Right ventricle myocardium inferior (tissue), 1 donor: ENCODE measurements at regions of chr11 and their contacts with region 1.

Region 1: DNA sequence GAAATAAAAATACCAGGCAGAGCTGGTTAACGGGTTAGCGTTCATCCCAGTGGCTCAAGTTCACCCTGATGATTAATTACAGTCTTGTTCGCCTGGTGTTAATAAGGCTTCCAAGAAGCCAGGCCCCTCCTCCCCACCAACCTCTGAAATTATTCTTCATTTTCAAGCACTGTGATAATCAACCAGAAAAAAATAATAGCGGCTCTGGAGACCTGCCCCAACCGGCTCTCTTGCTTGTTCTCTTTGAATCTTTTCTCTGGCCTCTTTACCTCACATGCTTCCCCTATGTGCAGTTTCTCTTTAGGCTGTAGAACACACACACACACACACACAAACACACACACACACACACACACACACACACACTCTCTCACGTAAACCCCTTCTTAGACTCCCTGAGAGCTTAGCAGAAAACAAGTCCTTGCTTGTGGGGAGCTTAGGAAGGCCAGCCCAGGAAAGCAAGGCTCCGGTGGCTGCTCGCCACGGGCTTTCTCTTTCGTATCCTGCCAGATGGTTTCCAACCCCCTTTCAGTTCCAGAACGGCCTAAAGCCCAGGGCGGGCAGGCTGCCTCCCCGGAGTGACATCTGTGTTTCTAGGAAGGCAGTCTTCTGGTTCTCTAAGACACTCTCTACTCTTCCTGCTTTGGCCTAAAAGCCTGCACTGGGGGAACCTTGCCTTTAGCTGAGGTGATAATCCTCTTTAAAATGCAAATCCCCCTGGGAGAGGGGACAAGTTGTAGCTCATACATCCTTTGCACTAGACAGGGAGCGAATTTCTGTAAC is 106.4 kb upstream of the SESN3 start:
- DNase-seq: peak; percentile 84
- ATAC-seq: peak; percentile 78

Region 2: DNA sequence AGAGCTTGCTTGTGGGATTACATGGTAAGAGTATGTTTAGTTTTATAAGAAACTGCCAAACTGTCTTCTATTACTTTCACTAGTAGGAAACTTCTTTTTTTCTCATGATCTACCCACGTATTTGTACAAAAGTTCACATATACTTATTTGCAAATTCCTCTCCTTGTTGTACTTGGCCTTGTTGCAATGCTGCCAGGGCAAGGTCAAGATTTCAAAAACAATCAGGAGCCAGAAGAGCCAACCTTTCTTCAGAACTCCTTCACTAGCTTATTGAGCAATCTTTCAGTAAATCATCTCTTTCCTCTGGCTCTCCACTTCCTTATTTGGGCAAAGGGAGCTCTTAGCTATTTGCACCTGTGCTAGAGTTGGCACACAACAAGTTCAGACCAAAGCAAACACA is 260.9 kb before region 1 on chr11:
- intact Hi-C with region 1: loop called (anchors 10 kb)
- DNase-seq: no peak
- ATAC-seq: no peak

Region 3: GRCh38 chr11:95231127-95231880 is 106.1 kb before region 1 on chr11 and contains the start of gene SESN3:
- intact Hi-C with region 1: loop called (anchors 5 kb)
- DNase-seq: peak; percentile 99
- ATAC-seq: peak; percentile 98
- total RNA-seq, gene SESN3: 6.0 TPM

Region 4: GRCh38 chr11:95299078-95299679 is 38.2 kb before region 1 on chr11:
- intact Hi-C with region 1: no loop called
- DNase-seq: no peak
- ATAC-seq: no peak